ENCODE measurements at regions of chr3 and their contacts with region 1.

Region 1: GRCh38 chr3:1998739-1999138 is 99.9 kb upstream of the CNTN4 start:
- DNase-seq: no peak
- ATAC-seq: no peak
- H3K4me3 ChIP-seq: no peak overlapping the region
- H3K27ac ChIP-seq: no peak overlapping the region
- H3K4me1 ChIP-seq: no peaks in the 10 kb centered on the region
- H3K27me3 ChIP-seq: no peaks in the 10 kb centered on the region
- CTCF ChIP-seq: no peak

Region 2: GRCh38 chr3:1953536-1953935 is 45.2 kb before region 1 on chr3:
- intact Hi-C with region 1: no loop called
- DNase-seq: no peak
- ATAC-seq: no peak
- H3K4me3 ChIP-seq: no peak overlapping the region
- H3K27ac ChIP-seq: no peak overlapping the region
- H3K4me1 ChIP-seq: no peaks in the 10 kb centered on the region
- H3K27me3 ChIP-seq: no peaks in the 10 kb centered on the region
- CTCF ChIP-seq: no peak

Region 3: GRCh38 chr3:2082871-2083480 is 84.2 kb after region 1 on chr3:
- intact Hi-C with region 1: no loop called
- DNase-seq: no peak
- ATAC-seq: no peak
- H3K4me3 ChIP-seq: no peak overlapping the region
- H3K27ac ChIP-seq: no peak overlapping the region
- H3K4me1 ChIP-seq: no peaks in the 10 kb centered on the region
- H3K27me3 ChIP-seq: no peaks in the 10 kb centered on the region
- CTCF ChIP-seq: no peak

Region 4: DNA sequence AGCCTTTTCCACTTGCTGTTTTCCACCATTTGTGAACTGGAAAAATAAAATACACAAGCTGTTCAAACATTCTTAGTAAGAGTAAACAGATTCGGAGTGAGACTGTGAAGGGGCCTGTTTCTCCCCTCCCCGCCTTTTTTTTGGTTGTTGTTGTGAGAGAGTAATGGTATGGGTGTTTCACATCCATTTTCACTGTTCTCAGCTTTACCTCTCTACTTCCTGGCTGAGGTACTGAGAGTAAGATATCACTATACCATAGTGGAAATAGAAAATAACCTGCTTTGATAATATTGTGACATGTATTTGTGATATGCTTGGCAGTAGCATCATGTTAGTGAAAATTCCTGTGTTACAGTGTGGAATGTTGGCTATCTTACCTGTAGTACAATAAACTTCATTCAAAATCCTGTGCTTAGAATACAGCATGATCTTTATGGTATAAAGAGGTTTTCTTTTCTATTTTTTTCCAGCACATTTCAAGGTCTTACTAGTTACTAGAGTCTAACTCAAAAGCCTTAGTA is 111.9 kb after region 1 on chr3:
- intact Hi-C with region 1: no loop called
- DNase-seq: no peak
- ATAC-seq: no peak
- H3K4me3 ChIP-seq: no peak overlapping the region
- H3K27ac ChIP-seq: no peak overlapping the region
- H3K4me1 ChIP-seq: no peaks in the 10 kb centered on the region
- H3K27me3 ChIP-seq: peaks cover 0 to 4% (median 0%) of the 10 kb centered on the region in 7 donors
- CTCF ChIP-seq: no peak

Region 5: DNA sequence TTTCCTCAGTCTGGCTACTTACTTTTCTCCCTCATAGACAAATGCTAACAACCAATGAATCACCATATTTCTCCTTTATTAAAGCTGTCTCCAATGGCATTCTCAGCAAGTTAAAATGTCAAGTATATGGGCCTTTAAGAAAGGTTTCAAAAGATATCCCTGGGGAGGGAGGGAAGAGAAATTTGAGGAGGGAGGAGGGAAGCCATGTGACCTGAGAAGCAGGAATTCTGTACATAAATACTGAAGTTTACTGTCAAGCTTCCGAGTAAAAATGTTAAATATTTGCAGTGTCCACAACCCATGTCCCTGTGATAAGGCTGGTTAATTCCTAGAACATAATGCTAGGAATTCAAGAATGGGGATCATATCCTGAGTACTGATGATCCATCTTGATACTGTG is 275.8 kb after region 1 on chr3:
- intact Hi-C with region 1: loop called in 1 of 10 experiments (anchors 5 kb)
- DNase-seq: no peak
- ATAC-seq: no peak
- H3K4me3 ChIP-seq: no peak overlapping the region
- H3K27ac ChIP-seq: no peak overlapping the region
- H3K4me1 ChIP-seq: no peaks in the 10 kb centered on the region
- H3K27me3 ChIP-seq: no peaks in the 10 kb centered on the region
- CTCF ChIP-seq: no peak